SK-N-SH (cell line): ENCODE measurements at regions of chr11 and their contacts with region 1.

Region 1: GRCh38 chr11:58629857-58630256 is 7.4 kb downstream of the CNTF start:
- DNase-seq: peak; percentile 39
- H3K4me3 ChIP-seq: peak overlapping the region in 1 of 2 experiments; percentile 27; a peak in 1 of 4 replicates
- H3K27ac ChIP-seq: no peak overlapping the region
- H3K4me1 ChIP-seq: peaks cover 0 to 17% of the 10 kb centered on the region in 2 experiments; a peak in 3 of 4 replicates
- H3K27me3 ChIP-seq: no peaks in the 10 kb centered on the region
- CTCF ChIP-seq: peak; percentile 65
- EP300 ChIP-seq: no peak
- RAD21 ChIP-seq: peak; percentile 60

Region 2: DNA sequence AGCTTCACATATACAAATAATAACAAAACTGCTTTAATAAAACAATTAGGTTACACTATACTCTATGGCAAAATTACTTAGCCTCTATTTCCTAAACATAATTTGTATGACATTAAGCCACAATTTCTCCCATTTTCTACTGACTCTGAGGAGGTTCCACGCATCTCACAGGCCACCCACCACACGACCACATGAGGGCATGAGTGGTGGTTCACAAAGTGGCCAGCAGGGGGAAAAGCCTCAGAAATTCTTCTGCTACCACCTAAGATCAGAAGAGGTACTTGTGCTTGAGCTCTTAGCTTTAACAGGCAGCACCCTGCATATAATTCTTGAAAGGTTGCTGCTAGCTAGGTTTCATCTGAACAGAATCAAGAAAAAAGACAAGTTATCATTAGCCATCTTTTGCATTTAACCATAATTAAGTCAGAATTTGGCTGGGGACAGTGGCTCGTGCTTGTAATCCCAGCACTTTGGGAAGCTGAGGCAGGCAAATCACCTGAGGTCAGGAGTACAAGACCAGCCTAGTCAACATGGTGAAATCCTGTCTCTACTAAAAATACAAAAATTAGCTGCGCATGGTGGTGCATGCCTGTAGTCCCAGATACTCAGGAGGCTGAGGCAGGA is 61.9 kb before region 1 on chr11:
- CTCF ChIA-PET with region 1: interaction called, 33 read pairs
- POLR2A ChIA-PET with region 1: no interaction called
- DNase-seq: peak; percentile 52
- H3K4me3 ChIP-seq: no peak overlapping the region
- H3K27ac ChIP-seq: no peak overlapping the region
- H3K4me1 ChIP-seq: peaks cover 0 to 4% of the 10 kb centered on the region in 2 experiments; a peak in 1 of 4 replicates
- H3K27me3 ChIP-seq: no peaks in the 10 kb centered on the region
- CTCF ChIP-seq: peak; percentile 80
- EP300 ChIP-seq: no peak
- RAD21 ChIP-seq: peak; percentile 45

Region 3: DNA sequence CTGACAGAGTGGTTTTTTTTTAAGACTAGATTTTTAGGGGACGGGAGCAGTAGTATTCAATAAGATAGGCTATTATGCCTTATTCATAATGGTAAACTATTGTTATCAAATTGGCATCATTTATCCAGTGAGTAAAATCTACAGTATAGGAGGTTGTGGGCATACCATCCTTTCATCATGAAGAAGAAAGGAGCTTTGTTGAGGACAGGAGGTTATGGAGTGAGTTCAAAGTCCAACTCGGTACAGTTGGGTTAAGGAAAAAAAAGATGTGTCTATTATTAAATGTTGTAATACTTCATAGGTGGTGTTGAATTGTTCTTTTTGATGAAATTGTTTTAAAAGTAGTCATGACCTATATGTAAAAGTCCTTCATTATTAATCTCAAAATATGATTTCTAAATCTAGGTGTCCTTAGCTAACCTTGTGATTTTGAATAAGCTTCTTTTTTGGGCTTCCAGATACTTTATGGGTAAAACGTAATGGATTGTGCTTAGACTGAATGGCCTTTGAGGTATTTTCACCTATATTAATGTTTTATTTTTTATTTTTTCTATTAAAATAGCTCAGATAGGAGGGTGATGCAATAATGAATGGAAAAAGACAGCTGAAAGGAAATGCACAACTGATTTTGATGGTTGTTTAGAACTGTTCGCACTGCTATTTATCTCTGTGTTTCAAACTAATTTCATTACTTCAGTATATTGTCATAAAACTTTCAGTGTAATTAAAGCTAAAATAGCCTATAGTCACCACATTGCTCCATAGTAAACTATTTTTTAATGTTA is 22.7 kb before region 1 on chr11:
- CTCF ChIA-PET with region 1: interaction called, 10 read pairs
- POLR2A ChIA-PET with region 1: no interaction called
- DNase-seq: no peak
- H3K4me3 ChIP-seq: no peak overlapping the region
- H3K27ac ChIP-seq: no peak overlapping the region
- H3K4me1 ChIP-seq: peaks cover 0 to 8% of the 10 kb centered on the region in 2 experiments; a peak in 3 of 4 replicates
- H3K27me3 ChIP-seq: no peaks in the 10 kb centered on the region
- CTCF ChIP-seq: no peak
- EP300 ChIP-seq: no peak
- RAD21 ChIP-seq: no peak

Region 4: GRCh38 chr11:58640386-58641023 is 10.6 kb after region 1 on chr11:
- CTCF ChIA-PET with region 1: interaction called, 13 read pairs
- POLR2A ChIA-PET with region 1: no interaction called
- DNase-seq: no peak
- H3K4me3 ChIP-seq: no peak overlapping the region
- H3K27ac ChIP-seq: no peak overlapping the region
- H3K4me1 ChIP-seq: no peaks in the 10 kb centered on the region
- H3K27me3 ChIP-seq: peaks cover 10% of the 10 kb centered on the region; the same call in 1 of the 2 replicates
- CTCF ChIP-seq: no peak
- EP300 ChIP-seq: no peak
- RAD21 ChIP-seq: no peak